ENCODE measurements at regions of chr1 and their contacts with region 1.

Region 1: DNA sequence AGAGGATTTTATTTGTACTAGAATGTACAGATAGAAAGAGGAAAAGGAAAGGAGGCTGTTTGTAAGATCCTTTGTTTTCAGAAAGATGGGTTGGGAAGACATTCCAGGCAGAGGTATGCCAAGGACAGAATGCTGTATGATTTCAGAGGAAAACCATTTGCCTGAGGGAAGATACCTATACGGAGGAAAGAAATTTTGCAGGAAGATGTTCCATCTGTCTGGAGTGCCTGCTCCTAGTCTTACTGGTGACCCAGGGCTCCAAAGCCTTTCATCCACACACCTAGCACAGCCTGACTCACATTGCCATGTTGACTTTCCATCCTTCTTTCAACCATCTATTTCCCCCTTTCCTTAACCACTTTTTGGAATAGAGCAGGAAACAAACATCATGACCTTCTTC is 18.2 kb downstream of the SAMD13 start:
- DNase-seq: no peak
- ATAC-seq: no peak
- H3K4me3 ChIP-seq: no peak overlapping the region
- H3K27ac ChIP-seq: no peak overlapping the region
- H3K4me1 ChIP-seq: no peaks in the 10 kb centered on the region
- H3K27me3 ChIP-seq: no peaks in the 10 kb centered on the region; a peak in 1 of 5 replicates
- CTCF ChIP-seq: no peak
- EP300 ChIP-seq: no peak
- POLR2A ChIP-seq: no peak
- RAD21 ChIP-seq: no peak

Region 2: GRCh38 chr1:84060781-84061180 is 258.9 kb before region 1 on chr1:
- CTCF ChIA-PET with region 1: no interaction called
- POLR2A ChIA-PET with region 1: no interaction called
- in situ Hi-C with region 1: no loop called
- intact Hi-C with region 1: no loop called
- DNase-seq: no peak
- ATAC-seq: no peak
- H3K4me3 ChIP-seq: no peak overlapping the region
- H3K27ac ChIP-seq: no peak overlapping the region
- H3K4me1 ChIP-seq: no peaks in the 10 kb centered on the region
- H3K27me3 ChIP-seq: no peaks in the 10 kb centered on the region
- CTCF ChIP-seq: no peak
- EP300 ChIP-seq: no peak
- POLR2A ChIP-seq: no peak
- RAD21 ChIP-seq: no peak

Region 3: DNA sequence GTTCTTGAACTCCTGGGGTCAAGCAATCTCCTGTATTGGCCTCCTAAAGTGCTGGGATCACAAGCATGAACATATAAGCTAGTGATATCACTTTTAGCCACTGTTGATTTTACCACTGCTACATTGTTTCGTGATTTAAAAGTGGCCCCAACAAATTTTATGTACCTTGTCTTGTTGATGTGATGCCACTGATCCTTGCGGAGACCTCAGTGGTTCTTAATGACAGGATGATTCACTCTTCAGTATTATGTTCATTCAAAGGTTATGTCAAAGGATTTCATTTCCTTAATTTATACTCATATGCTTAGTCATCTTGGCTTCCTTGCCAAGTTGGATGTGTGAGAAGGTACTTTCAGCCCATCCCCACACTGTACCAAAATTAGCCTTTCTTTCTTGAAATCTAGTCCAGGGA is 163.4 kb before region 1 on chr1:
- CTCF ChIA-PET with region 1: no interaction called
- POLR2A ChIA-PET with region 1: no interaction called
- in situ Hi-C with region 1: loop called (anchors 10 kb)
- intact Hi-C with region 1: no loop called
- DNase-seq: no peak
- ATAC-seq: no peak
- H3K4me3 ChIP-seq: no peak overlapping the region
- H3K27ac ChIP-seq: no peak overlapping the region
- H3K4me1 ChIP-seq: no peaks in the 10 kb centered on the region
- H3K27me3 ChIP-seq: no peaks in the 10 kb centered on the region
- CTCF ChIP-seq: no peak
- EP300 ChIP-seq: no peak
- POLR2A ChIP-seq: no peak
- RAD21 ChIP-seq: no peak

Region 4: DNA sequence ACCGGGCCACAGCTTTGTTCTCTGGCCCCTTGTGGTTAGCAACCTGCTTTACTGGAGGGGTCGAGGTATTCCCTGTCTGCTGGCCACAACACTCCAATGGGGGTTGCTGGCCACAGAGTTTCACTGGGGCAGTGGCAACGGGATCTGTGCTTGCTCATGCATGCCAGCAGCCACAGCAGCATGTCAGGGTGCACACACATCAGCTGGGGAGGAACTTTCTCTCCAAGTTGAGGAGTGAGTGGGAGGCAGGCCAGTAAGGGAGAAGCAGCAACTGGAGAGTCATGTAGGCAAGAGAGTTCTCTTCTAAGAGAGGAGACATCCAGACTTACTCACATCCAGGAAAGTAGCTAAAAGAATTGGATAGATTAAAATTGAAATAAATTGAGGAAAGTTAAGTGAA is 19.8 kb after region 1 on chr1:
- CTCF ChIA-PET with region 1: no interaction called
- POLR2A ChIA-PET with region 1: no interaction called
- in situ Hi-C with region 1: no loop called
- intact Hi-C with region 1: no loop called
- DNase-seq: no peak
- ATAC-seq: no peak
- H3K4me3 ChIP-seq: no peak overlapping the region
- H3K27ac ChIP-seq: no peak overlapping the region
- H3K4me1 ChIP-seq: no peaks in the 10 kb centered on the region; a peak in 2 of 5 replicates
- H3K27me3 ChIP-seq: no peaks in the 10 kb centered on the region
- CTCF ChIP-seq: no peak
- EP300 ChIP-seq: no peak
- POLR2A ChIP-seq: no peak
- RAD21 ChIP-seq: no peak

Region 5: GRCh38 chr1:84427520-84428188 is 108.0 kb after region 1 on chr1:
- CTCF ChIA-PET with region 1: no interaction called
- POLR2A ChIA-PET with region 1: no interaction called
- in situ Hi-C with region 1: no loop called
- intact Hi-C with region 1: no loop called
- DNase-seq: peak in 1 of 4 experiments; percentile 14
- ATAC-seq: peak; percentile 66
- H3K4me3 ChIP-seq: no peak overlapping the region
- H3K27ac ChIP-seq: no peak overlapping the region
- H3K4me1 ChIP-seq: peaks cover 0 to 11% of the 10 kb centered on the region in 2 experiments; a peak in 3 of 5 replicates
- H3K27me3 ChIP-seq: no peaks in the 10 kb centered on the region
- CTCF ChIP-seq: no peak
- EP300 ChIP-seq: no peak
- POLR2A ChIP-seq: no peak
- RAD21 ChIP-seq: no peak

Measured in K562 (cell line).